OCI-LY7 (cell line): ENCODE measurements at regions of chr2 and their contacts with region 1.

Region 1: DNA sequence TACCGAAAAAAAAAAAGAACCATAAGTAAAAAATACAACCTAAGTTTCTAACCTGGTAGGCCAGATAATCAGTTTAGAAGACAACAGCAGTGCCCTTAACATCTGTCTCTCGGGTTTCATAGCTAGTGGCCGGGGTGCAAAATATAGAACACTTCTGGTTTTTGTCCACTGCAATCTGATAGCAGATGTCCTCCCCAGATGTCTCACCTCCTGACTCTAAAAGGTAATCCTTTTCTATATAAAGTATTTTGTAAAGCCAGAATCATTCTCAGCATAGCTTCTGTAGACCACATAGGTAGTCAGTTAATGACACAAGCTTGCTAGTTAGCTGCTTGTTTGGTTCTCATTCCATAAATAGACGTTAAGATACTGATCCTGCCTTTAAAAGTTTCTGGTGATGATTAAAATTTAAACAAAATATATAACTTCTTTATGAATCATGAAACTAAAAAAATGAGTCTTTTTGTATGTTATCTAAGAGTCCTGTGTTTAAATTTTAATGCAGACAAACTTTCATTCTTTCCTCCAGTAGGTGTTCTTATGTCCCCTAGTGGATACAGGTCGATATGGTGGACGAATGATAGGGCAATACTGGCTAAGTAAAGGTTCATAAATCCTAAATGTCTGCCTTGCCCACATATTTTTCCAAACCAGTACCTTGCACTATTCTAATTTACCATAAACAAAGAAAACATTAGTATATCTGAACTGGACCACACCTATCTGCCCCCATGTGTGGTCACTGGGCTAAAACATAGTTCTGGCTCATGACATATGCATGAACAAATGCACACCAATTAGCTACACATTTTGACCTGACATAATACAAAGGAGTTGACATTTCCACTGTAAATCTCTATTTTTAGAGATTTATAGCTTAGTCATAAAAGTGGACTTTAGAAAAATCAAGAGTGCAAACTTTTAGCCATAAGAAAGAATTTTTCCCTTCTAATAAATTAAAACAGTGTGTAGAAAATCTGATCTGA is 171.0 kb downstream of the SRBD1 start:
- DNase-seq: peak; percentile 93
- H3K4me3 ChIP-seq: peak overlapping the region; percentile 31
- H3K27ac ChIP-seq: peak overlapping the region; percentile 100
- H3K4me1 ChIP-seq: peaks cover 76% of the 10 kb centered on the region
- CTCF ChIP-seq: peak; percentile 81

Region 2: GRCh38 chr2:44981136-44982108 is 458.7 kb before region 1 on chr2:
- CTCF ChIA-PET with region 1: no interaction called
- POLR2A ChIA-PET with region 1: interaction called, 5 read pairs
- intact Hi-C with region 1: loop called (anchors 1 kb)
- DNase-seq: peak; percentile 87
- H3K4me3 ChIP-seq: no peak overlapping the region
- H3K27ac ChIP-seq: peak overlapping the region; percentile 37
- H3K4me1 ChIP-seq: peaks cover 21% of the 10 kb centered on the region
- CTCF ChIP-seq: peak; percentile 96

Region 3: DNA sequence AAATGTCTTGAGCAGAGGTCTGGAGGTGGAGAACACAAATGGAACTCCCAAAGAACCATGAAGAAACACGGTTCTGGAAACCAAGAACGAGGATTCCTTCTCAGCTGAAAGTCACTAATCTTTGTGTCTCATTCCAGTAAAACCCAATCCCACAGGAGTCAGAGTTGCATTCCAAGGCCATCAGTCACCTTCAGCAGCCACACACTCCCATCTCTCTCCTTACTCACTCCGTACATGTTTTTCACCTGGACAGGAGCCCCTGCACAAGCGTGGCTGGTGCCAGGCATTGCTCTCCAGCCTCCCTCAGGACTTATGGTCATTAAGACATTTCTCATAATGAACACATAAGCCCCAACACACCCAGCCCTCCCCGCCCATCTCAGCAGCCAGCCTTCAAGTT is 255.5 kb before region 1 on chr2:
- CTCF ChIA-PET with region 1: no interaction called
- POLR2A ChIA-PET with region 1: interaction called, 3 read pairs
- intact Hi-C with region 1: loop called (anchors 5 kb)
- DNase-seq: no peak
- H3K4me3 ChIP-seq: no peak overlapping the region
- H3K27ac ChIP-seq: no peak overlapping the region
- H3K4me1 ChIP-seq: peaks cover 45% of the 10 kb centered on the region
- CTCF ChIP-seq: no peak

Region 4: GRCh38 chr2:45343251-45344017 is 96.6 kb before region 1 on chr2:
- CTCF ChIA-PET with region 1: no interaction called
- POLR2A ChIA-PET with region 1: no interaction called
- intact Hi-C with region 1: no loop called
- DNase-seq: no peak
- H3K4me3 ChIP-seq: no peak overlapping the region
- H3K27ac ChIP-seq: no peak overlapping the region
- H3K4me1 ChIP-seq: no peaks in the 10 kb centered on the region
- CTCF ChIP-seq: no peak

Region 5: GRCh38 chr2:45452866-45453265 is 12.8 kb after region 1 on chr2:
- CTCF ChIA-PET with region 1: interaction called, 4 read pairs
- POLR2A ChIA-PET with region 1: interaction called, 114 read pairs
- intact Hi-C with region 1: loop called (anchors 1 kb)
- DNase-seq: no peak
- H3K4me3 ChIP-seq: no peak overlapping the region
- H3K27ac ChIP-seq: peak overlapping the region; percentile 99
- H3K4me1 ChIP-seq: peaks cover 70% of the 10 kb centered on the region
- CTCF ChIP-seq: no peak

Region 6: DNA sequence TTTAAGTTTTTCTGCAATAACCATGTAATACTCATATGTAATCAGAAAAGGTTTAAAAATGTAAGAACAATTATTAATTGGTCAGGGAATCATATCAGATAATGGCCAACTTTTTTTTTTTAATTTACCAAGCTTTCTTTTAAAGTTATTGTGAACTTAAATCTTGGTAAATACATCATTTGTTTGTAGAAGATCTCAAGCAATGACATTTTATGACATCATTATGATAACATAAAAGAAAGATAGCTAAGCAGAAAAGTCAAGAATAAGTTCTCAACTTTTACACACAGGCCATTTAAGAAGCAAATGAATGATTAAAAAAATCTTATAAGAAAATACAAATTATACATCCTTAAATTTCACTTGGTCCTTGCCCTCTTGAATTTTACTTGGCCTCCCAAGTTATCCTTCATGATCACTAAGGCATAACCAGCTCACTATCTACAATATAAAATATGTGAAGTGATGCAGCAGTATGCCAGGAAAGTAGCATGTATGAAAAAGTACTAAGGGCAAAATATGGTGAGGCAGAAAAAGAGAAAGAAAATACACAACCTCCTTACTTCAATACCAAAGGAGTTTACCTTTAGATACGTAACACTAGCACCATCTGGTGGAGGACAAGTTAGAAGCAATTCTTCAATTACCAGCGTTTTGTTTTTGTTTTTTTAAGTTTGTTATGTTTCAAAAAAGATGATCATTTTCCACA is 54.3 kb after region 1 on chr2:
- CTCF ChIA-PET with region 1: no interaction called
- POLR2A ChIA-PET with region 1: interaction called, 4 read pairs
- intact Hi-C with region 1: loop called (anchors 2 kb)
- DNase-seq: peak; percentile 88
- H3K4me3 ChIP-seq: no peak overlapping the region
- H3K27ac ChIP-seq: peak overlapping the region; percentile 72
- H3K4me1 ChIP-seq: peaks cover 41% of the 10 kb centered on the region
- CTCF ChIP-seq: peak; percentile 97